Mammary epithelial cell (primary cell): ENCODE measurements at regions of chr14 and their contacts with region 1.

Region 1: DNA sequence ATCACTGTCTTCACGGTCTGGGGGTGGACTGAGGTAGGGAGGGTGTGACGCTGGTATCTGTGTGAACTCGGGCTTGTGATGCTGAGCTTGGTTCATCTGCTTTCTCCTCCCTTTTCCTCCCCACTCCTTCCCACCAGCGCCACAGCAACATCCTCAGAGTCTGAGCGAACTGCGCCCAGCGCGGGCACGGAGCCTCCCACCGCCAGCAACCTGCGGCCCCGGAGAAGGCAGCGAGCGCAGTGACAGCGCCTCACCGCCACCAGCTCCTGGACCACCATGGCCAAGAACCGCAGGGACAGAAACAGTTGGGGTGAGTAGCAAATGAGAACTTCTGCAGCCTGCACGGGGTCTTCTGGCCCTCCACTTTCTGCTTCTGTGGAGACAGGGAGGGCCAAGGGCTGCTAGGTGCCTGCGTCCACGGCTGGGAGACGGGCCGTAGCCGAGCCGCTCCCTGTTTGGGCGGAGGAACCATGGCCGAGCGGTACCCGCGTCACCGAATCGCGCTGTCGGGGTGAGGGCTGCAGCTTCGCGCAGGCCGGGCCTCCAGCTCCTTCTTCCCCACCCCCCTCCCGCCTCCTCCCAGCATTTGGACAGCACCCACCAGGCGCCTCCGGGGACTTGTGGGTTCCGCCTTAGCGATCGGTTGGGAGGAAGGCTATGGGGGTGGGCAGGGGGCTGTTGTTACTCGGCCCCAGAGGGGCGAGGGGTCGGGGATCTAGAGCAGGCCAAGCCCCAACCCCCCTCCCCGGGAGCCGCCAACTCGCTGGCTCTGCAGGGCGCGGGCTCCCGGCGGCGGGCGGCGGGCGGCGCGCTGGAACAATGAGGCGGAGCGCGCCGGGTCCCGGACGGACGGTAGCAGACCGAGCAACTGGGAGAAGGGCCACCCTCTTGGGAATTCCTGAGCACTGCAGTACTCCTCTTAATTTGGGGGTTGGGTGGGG is at the start of gene ATL1:
- DNase-seq: peak; percentile 86
- H3K4me3 ChIP-seq: peak within 1 kb of the TSS; percentile 55 to 61 (median 57)
- H3K27ac ChIP-seq: peak within 1 kb of the TSS; percentile 65
- H3K4me1 ChIP-seq: peaks cover 15% of the 10 kb centered on the region
- H3K27me3 ChIP-seq: no peaks in the 10 kb centered on the region
- CTCF ChIP-seq: peak in 1 of 2 donors; percentile 2
- total RNA-seq, gene ATL1: 7.5 to 21.2 TPM

Region 2: DNA sequence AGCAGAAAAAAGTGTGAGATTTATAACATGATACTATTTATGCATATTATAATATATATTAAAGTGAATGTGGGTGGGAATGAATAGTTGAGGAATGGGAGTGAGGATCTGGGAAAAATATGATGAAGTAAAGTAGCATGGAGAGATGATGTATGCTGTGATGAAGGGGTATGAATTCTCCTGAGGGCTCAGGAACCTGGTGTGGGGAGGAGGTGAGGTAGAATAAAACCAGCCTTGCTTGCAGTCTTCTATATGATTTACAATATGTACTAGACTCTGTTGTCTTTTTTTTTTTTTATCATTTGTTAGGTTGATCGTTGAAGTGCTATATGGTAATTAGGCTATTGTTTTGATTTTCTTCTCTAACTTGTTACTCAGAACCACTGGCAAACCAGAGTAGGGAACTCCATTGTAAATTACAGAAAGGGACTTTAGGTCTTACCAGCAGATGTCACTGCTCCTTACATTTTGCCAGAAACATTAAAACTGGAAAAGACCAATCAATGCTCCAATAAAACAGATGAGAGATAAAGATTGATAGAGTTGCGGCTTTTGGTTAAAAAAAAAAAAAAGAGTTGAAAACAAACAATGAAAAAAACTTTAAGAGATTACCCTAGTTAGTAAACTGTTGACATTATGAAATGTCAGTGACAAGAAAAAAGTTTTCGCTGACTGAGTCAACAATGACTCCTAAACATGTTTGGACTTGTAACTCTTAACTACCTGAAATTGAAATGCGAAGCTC is 39.6 kb after region 1 on chr14:
- CTCF ChIA-PET with region 1: no interaction called
- dilution Hi-C with region 1: no loop called
- in situ Hi-C with region 1: no loop called
- intact Hi-C with region 1: loop called (anchors 1 kb)
- DNase-seq: peak; percentile 76
- H3K4me3 ChIP-seq: peak overlapping the region in 1 of 3 experiments; percentile 32
- H3K27ac ChIP-seq: peak overlapping the region; percentile 61
- H3K4me1 ChIP-seq: peaks cover 27% of the 10 kb centered on the region
- H3K27me3 ChIP-seq: no peaks in the 10 kb centered on the region
- CTCF ChIP-seq: peak; percentile 55 to 59